ENCODE measurements at regions of chr19 and their contacts with region 1.

Region 1: DNA sequence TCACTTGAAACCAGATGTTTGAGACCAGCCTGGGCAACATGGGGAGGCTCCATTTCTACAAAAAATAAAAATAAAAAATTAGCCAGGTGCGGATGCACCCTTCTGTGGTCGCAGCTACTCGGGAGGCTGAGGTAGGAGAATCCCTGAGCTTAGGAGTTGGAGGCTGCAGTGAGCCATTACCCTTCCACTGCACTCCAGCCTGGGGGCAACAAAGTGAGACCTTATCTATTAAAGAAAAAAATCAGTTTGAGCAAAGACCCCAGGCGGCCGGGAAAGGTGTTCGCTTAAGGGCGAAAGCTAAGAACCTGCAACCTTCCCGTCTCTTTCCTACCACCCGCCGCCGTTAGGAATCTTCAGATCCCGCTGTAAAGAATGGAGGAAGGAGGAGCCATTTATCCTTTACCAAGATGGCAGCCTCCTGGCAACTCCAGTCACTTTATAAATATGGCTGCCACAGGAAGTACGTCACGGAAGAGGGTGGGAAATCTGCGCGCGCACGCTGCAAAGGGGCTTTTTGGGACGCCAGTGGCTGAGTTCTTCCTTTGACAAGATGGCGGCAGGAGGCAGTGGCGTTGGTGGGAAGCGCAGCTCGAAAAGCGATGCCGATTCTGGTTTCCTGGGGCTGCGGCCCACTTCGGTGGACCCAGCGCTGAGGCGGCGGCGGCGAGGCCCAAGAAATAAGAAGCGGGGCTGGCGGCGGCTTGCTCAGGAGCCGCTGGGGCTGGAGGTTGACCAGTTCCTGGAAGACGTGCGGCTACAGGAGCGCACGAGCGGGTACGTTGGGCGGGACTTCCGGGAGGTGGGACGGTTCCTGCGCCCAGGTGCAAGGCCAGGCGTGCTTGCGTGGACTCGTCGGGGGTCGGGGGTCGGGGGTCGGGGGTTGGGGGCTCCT is at the start of gene NOP53:
- DNase-seq: peak; percentile 96
- ATAC-seq: peak; percentile 78
- H3K4me3 Mint-ChIP-seq: peak within 1 kb of the TSS; percentile 99
- H3K27ac Mint-ChIP-seq: peak within 1 kb of the TSS; percentile 100
- H3K4me1 Mint-ChIP-seq: peaks cover 51% of the 10 kb centered on the region
- H3K27me3 Mint-ChIP-seq: no peaks in the 10 kb centered on the region
- CTCF ChIP-seq: no peak
- total RNA-seq, gene NOP53: 695 and 783 TPM in 2 replicates

Region 2: GRCh38 chr19:47348819-47349795 is 396.1 kb before region 1 on chr19 and contains the start of gene DHX34:
- CTCF ChIA-PET with region 1: no interaction called
- POLR2A ChIA-PET with region 1: interaction called, 10 read pairs
- intact Hi-C with region 1: loop called (anchors 1 kb)
- DNase-seq: peak; percentile 99
- ATAC-seq: peak; percentile 98
- H3K4me3 Mint-ChIP-seq: peak within 1 kb of the TSS; percentile 98
- H3K27ac Mint-ChIP-seq: peak within 1 kb of the TSS; percentile 90
- H3K4me1 Mint-ChIP-seq: peaks cover 40% of the 10 kb centered on the region
- H3K27me3 Mint-ChIP-seq: no peaks in the 10 kb centered on the region
- CTCF ChIP-seq: peak; percentile 65
- total RNA-seq, gene DHX34: 17.4 and 20.0 TPM in 2 replicates

Region 3: GRCh38 chr19:47483800-47484690 is 261.2 kb before region 1 on chr19 and contains the start of gene KPTN:
- CTCF ChIA-PET with region 1: no interaction called
- POLR2A ChIA-PET with region 1: interaction called, 6 read pairs
- intact Hi-C with region 1: loop called (anchors 1 kb)
- DNase-seq: peak; percentile 85
- ATAC-seq: peak; percentile 87
- H3K4me3 Mint-ChIP-seq: peak within 1 kb of the TSS; percentile 98
- H3K27ac Mint-ChIP-seq: peak within 1 kb of the TSS; percentile 99
- H3K4me1 Mint-ChIP-seq: peaks cover 42% of the 10 kb centered on the region
- H3K27me3 Mint-ChIP-seq: no peaks in the 10 kb centered on the region
- CTCF ChIP-seq: no peak
- total RNA-seq, gene KPTN: 8.0 and 8.7 TPM in 2 replicates

Region 4: GRCh38 chr19:47587295-47587694 is 158.0 kb before region 1 on chr19:
- CTCF ChIA-PET with region 1: no interaction called
- POLR2A ChIA-PET with region 1: no interaction called
- intact Hi-C with region 1: no loop called
- DNase-seq: no peak
- ATAC-seq: no peak
- H3K4me3 Mint-ChIP-seq: no peak overlapping the region
- H3K27ac Mint-ChIP-seq: no peak overlapping the region
- H3K4me1 Mint-ChIP-seq: no peaks in the 10 kb centered on the region
- H3K27me3 Mint-ChIP-seq: peaks cover 26% of the 10 kb centered on the region
- CTCF ChIP-seq: no peak

Region 5: DNA sequence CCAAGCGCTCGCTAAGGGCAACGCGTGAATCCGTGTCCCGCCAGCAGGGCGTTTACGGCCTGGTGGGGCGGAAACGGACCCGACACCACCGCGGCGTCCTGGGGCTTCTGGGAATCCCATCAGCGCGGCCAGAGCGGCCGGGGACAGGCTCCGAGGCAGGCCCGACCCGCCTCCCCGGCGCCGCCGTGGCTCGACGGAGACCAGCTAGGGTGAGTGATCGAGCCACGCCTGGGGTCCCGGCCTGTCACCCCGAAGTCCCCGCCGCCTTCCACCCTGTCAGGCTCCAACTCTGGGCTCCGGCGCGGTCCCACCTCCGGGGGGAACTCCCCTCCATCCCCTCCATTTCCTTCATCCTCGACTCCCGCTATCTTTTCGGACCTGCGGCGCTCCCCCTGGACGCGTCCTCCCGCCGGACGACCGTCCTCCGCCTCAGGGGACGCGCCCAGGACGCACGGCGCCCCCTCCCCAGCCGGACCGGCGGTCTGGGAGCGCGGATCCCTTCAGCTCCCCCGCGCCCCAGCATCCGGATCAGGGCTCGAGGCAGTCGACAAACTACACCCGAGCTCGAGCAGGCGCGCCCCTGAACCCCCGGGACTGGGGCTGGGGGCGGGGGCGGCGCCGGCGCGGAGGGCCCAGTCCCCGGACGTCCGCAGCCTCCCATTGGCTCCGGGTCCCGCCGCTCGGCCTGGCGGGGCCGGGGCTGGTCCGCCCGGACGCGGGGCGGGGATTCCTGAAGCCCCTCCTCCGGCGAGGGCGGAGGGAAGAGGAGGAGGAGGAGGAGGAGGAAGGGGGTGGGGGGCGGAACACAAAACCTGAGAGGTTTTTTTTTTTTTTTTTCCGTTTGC is 137.0 kb before region 1 on chr19:
- CTCF ChIA-PET with region 1: no interaction called
- POLR2A ChIA-PET with region 1: no interaction called
- intact Hi-C with region 1: loop called (anchors 1 kb)
- DNase-seq: peak; percentile 99
- ATAC-seq: peak; percentile 90
- H3K4me3 Mint-ChIP-seq: peak overlapping the region; percentile 84
- H3K27ac Mint-ChIP-seq: peak overlapping the region; percentile 71
- H3K4me1 Mint-ChIP-seq: peaks cover 25% of the 10 kb centered on the region
- H3K27me3 Mint-ChIP-seq: no peaks in the 10 kb centered on the region
- CTCF ChIP-seq: no peak

Region 6: DNA sequence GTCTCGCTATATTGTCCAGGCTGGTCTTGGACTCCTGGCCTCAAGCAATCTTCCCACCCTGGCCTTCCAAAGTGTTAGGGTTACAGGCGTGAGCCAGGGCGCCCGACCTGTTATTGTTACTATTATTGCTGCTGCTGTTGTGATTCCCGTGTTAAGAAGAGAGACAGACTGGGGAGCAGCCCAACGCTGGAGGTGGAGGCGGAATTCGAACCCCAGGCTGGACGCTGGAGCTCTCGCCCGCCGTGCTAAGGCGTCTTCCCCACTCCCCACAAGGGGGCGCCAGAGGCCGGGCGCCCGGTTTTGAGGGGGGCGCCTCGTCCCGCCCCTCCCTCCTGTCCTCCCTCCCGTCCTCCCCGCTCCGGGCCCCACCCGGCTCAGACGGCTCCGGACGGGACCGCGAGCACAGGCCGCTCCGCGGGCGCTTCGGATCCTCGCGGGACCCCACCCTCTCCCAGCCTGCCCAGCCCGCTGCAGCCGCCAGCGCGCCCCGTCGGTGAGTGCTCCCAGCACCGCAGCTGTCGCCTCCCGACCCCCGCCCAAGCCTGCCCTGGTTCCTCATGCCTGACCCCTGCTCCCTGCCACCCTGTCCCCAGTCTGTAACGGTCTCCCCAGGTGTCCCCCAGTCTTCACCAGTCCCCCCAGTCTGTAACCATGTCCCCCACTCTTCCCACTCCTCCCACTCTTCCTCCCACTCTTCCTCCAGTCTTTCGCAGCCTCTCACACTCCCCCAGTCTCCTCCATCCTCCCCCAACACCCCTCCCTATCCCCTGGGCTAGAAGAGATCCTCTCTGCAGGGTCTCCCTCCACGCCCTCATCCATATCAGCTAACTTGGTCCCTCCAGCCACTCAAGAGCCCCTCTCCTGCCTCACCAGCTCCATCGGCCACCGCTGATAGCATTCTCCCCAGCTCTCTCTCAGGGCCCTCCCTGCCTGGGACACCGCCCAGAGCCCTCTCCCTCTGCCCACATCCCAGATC is 31.9 kb before region 1 on chr19 and contains the start of gene EHD2:
- CTCF ChIA-PET with region 1: interaction called, 8 read pairs
- POLR2A ChIA-PET with region 1: no interaction called
- intact Hi-C with region 1: loop called (anchors 1 kb)
- DNase-seq: no peak
- ATAC-seq: no peak
- H3K4me3 Mint-ChIP-seq: no peak within 1 kb of the TSS
- H3K27ac Mint-ChIP-seq: no peak within 1 kb of the TSS
- H3K4me1 Mint-ChIP-seq: peaks cover 3% of the 10 kb centered on the region
- H3K27me3 Mint-ChIP-seq: peaks cover 32% of the 10 kb centered on the region
- CTCF ChIP-seq: no peak
- total RNA-seq, gene EHD2: not detected in 2 replicates

Region 7: DNA sequence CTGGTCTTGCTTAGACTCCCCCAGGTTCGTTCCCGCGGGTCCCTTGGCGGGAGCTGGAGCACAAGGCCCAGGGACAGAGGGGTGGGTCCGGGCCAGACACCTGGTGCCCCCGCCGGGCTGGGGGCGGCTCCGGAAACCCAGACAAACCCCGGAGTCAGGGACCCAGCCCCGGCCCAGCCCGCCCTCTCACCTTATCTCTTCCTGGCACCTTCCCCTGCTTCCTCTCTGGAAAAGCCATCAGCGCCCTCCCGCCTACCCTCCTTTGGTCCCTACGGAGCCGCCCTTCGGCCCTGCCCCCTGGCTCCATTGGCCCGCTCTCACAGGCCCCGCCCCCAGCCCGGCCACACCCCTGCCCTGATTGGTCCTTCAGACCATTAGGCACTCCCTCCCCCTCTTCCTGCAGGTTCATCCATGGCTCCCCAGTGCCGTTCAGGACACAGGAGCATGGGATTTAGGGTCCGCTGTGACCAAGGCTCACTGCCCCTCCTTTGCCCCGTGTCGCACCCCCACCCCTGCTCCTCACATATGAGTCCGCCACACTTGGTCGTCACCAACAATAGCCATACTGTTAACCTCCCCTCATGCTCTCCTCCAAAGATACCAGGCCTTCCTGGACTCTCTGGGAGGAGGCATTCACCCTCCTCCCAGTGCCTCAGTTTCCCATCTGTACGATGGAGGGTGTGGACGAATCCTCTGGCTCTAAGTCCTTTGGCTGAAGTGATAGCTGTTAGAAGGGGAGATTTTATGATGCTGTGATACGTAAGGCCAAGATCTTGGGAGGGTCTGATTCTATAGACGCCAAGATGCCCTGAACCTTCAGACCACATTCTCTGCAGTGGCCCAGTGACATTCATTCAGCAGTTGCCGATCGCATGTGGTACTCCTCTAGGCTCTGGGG is 15.0 kb before region 1 on chr19:
- CTCF ChIA-PET with region 1: no interaction called
- POLR2A ChIA-PET with region 1: no interaction called
- intact Hi-C with region 1: no loop called
- DNase-seq: no peak
- ATAC-seq: peak; percentile 40
- H3K4me3 Mint-ChIP-seq: peak overlapping the region; percentile 58
- H3K27ac Mint-ChIP-seq: no peak overlapping the region
- H3K4me1 Mint-ChIP-seq: peaks cover 11% of the 10 kb centered on the region
- H3K27me3 Mint-ChIP-seq: peaks cover 31% of the 10 kb centered on the region
- CTCF ChIP-seq: no peak

Region 8: GRCh38 chr19:47778089-47778953 is 33.1 kb after region 1 on chr19 and contains the start of gene SELENOW:
- CTCF ChIA-PET with region 1: no interaction called
- POLR2A ChIA-PET with region 1: interaction called, 4 read pairs
- intact Hi-C with region 1: loop called (anchors 1 kb)
- DNase-seq: peak; percentile 81
- ATAC-seq: peak; percentile 96
- H3K4me3 Mint-ChIP-seq: peak within 1 kb of the TSS; percentile 95
- H3K27ac Mint-ChIP-seq: peak within 1 kb of the TSS; percentile 91
- H3K4me1 Mint-ChIP-seq: peaks cover 17% of the 10 kb centered on the region
- H3K27me3 Mint-ChIP-seq: no peaks in the 10 kb centered on the region
- CTCF ChIP-seq: no peak
- total RNA-seq, gene SELENOW: 24.8 and 27.6 TPM in 2 replicates

Region 9: DNA sequence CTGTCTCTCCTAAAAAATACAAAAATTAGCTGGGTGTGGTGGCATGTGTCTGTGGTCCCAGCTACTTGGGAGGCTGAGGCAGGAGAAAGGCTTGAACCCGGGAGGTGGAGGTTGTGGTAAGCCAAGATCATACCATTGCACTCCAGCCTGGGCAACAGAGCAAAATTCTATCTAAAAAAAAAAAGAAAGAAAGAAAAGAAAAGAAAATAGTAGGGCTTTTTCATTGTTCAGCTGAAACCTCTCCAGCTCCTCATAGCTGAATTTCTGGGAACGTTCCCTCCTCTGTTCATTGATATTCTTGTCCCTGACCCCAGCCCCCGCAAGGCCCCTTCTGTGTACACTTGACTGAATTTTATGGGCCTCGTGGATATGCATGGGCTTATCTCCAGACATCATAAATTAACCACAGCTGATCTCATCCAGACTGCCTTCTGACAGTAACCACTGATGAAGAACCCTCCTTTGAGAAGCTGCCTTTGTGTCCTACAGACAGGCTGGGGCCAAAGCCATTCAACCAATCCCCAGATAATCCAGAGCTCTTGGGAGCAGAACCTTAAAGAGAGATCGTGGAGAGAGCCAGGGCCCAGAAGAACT is 249.1 kb after region 1 on chr19 and contains the start of gene ELSPBP1:
- CTCF ChIA-PET with region 1: no interaction called
- POLR2A ChIA-PET with region 1: no interaction called
- intact Hi-C with region 1: no loop called
- DNase-seq: no peak
- ATAC-seq: no peak
- H3K4me3 Mint-ChIP-seq: no peak within 1 kb of the TSS
- H3K27ac Mint-ChIP-seq: no peak within 1 kb of the TSS
- H3K4me1 Mint-ChIP-seq: no peaks in the 10 kb centered on the region
- H3K27me3 Mint-ChIP-seq: peaks cover 8% of the 10 kb centered on the region
- CTCF ChIP-seq: no peak
- total RNA-seq, gene ELSPBP1: not detected in 2 replicates

Measured in activated B cell treated with CpG ODN at 0.5 μM for 24 hours (primary cell).